ENCODE measurements at regions of chr7 and their contacts with region 1.

Region 1: GRCh38 chr7:97872025-97872669 is at the start of gene ASNS:
- DNase-seq: peak; percentile 78 to 90
- ATAC-seq: peak; percentile 90 to 96 (median 90)
- H3K4me3 ChIP-seq: peak within 1 kb of the TSS; percentile 68
- H3K4me3 Mint-ChIP-seq: peak within 1 kb of the TSS; percentile 91
- H3K27ac ChIP-seq: peak within 1 kb of the TSS; percentile 76
- H3K27ac Mint-ChIP-seq: peak within 1 kb of the TSS; percentile 83 to 85
- H3K4me1 ChIP-seq: peaks cover 16% of the 10 kb centered on the region
- H3K4me1 Mint-ChIP-seq: peaks cover 18% of the 10 kb centered on the region in 2 donors
- H3K27me3 ChIP-seq: no peaks in the 10 kb centered on the region
- H3K27me3 Mint-ChIP-seq: no peaks in the 10 kb centered on the region
- CTCF ChIP-seq: no peak
- total RNA-seq, gene ASNS: 13.4 to 18.8 (median 16.7) TPM

Region 2: DNA sequence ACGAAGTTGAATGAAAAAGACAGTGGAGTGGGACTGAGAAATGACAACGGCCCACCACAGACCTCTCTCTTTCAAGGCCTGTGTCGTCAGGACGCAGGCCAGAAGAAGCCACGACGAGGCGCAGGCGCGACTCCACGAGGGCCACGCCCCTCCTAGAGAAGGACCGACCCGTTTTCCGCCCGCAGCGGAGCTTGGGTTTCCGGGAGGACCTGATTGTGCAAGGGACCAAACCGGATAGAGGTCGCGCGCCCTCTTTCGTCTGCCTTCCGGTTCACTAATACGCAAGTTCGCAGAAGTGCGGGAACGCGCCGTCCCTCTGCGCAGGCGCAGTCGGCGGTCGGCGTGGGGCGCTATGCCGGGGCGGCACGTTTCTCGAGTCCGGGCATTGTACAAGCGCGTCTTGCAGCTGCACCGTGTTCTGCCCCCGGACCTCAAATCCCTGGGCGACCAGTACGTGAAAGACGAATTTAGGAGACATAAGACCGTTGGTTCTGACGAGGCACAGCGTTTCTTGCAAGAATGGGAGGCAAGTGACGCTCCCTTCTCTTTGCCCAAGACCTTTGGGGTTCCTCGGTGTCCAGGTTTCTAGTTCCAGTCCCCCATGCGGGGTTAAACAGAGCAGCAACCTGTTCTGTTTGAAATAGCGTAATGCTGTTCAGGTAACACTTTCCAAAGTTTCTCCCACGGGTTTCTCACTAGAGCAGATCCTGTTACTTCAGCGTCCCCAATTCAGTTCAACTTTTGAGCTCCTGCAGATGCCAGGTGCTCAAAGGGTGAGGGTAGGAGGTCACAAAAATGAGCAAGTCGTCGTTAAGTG is 754.6 kb before region 1 on chr7 and contains the start of gene SDHAF3:
- intact Hi-C with region 1: loop called (anchors 1 kb)
- DNase-seq: peak; percentile 96 to 99
- ATAC-seq: peak; percentile 96 to 99 (median 96)
- H3K4me3 ChIP-seq: peak within 1 kb of the TSS; percentile 77
- H3K4me3 Mint-ChIP-seq: peak within 1 kb of the TSS; percentile 94
- H3K27ac ChIP-seq: peak within 1 kb of the TSS; percentile 83
- H3K27ac Mint-ChIP-seq: peak within 1 kb of the TSS; percentile 85 to 92
- H3K4me1 ChIP-seq: peaks cover 11% of the 10 kb centered on the region
- H3K4me1 Mint-ChIP-seq: peaks cover 38 to 49% of the 10 kb centered on the region in 2 donors
- H3K27me3 ChIP-seq: no peaks in the 10 kb centered on the region
- H3K27me3 Mint-ChIP-seq: peaks cover under 1 to 2% of the 10 kb centered on the region in 2 donors
- CTCF ChIP-seq: no peak
- total RNA-seq, gene SDHAF3: 7.3 to 10.4 (median 10.1) TPM

Region 3: GRCh38 chr7:97595439-97595838 is 276.7 kb before region 1 on chr7:
- intact Hi-C with region 1: no loop called
- DNase-seq: no peak
- ATAC-seq: no peak
- H3K4me3 ChIP-seq: no peak overlapping the region
- H3K4me3 Mint-ChIP-seq: no peak overlapping the region
- H3K27ac ChIP-seq: no peak overlapping the region
- H3K27ac Mint-ChIP-seq: no peak overlapping the region
- H3K4me1 ChIP-seq: no peaks in the 10 kb centered on the region
- H3K4me1 Mint-ChIP-seq: no peaks in the 10 kb centered on the region
- H3K27me3 ChIP-seq: no peaks in the 10 kb centered on the region
- H3K27me3 Mint-ChIP-seq: no peaks in the 10 kb centered on the region
- CTCF ChIP-seq: no peak

Region 4: DNA sequence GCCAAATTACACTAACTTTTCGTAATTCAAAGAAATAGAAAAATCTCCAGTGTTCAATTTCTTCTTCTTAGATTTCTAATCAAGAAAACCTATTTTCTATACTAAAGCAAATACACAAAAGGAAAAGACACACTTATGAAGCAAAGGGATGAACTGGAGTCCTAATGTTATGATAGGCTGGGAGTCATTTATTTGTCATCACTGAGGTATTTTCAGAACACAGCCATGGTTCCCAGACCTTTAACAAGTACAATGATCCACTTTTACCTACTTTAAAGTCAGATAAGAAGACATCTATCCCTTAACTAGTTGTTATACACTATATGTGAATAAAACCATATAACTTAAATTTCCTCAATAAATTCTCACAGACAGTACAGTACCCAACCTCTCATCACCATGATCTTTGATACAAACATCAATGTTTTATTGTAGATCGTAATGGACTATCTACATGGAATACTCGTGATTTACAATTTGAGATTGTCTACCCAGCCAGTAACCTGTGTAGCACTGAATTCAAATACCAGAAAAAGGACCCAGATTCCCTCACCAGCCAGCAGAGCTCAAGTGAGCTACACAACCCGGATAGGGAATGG is 12.4 kb before region 1 on chr7:
- intact Hi-C with region 1: no loop called
- DNase-seq: no peak
- ATAC-seq: no peak
- H3K4me3 ChIP-seq: no peak overlapping the region
- H3K4me3 Mint-ChIP-seq: no peak overlapping the region
- H3K27ac ChIP-seq: no peak overlapping the region
- H3K27ac Mint-ChIP-seq: no peak overlapping the region
- H3K4me1 ChIP-seq: no peaks in the 10 kb centered on the region
- H3K4me1 Mint-ChIP-seq: no peaks in the 10 kb centered on the region
- H3K27me3 ChIP-seq: no peaks in the 10 kb centered on the region
- H3K27me3 Mint-ChIP-seq: no peaks in the 10 kb centered on the region
- CTCF ChIP-seq: no peak

Region 5: GRCh38 chr7:97971990-97972943 is 100.1 kb after region 1 on chr7:
- intact Hi-C with region 1: loop called (anchors 5 kb)
- DNase-seq: peak; percentile 66 to 89
- ATAC-seq: peak; percentile 87 to 92 (median 90)
- H3K4me3 ChIP-seq: peak overlapping the region; percentile 82
- H3K4me3 Mint-ChIP-seq: peak overlapping the region; percentile 95
- H3K27ac ChIP-seq: peak overlapping the region; percentile 55
- H3K27ac Mint-ChIP-seq: peak overlapping the region; percentile 86 to 94
- H3K4me1 ChIP-seq: peaks cover 17% of the 10 kb centered on the region
- H3K4me1 Mint-ChIP-seq: peaks cover 6 to 18% of the 10 kb centered on the region in 2 donors
- H3K27me3 ChIP-seq: no peaks in the 10 kb centered on the region
- H3K27me3 Mint-ChIP-seq: no peaks in the 10 kb centered on the region
- CTCF ChIP-seq: no peak

Measured in natural killer cell (primary cell).